Posterior vena cava (tissue), 2 donors: ENCODE measurements at regions of chr9 and their contacts with region 1.

Region 1: DNA sequence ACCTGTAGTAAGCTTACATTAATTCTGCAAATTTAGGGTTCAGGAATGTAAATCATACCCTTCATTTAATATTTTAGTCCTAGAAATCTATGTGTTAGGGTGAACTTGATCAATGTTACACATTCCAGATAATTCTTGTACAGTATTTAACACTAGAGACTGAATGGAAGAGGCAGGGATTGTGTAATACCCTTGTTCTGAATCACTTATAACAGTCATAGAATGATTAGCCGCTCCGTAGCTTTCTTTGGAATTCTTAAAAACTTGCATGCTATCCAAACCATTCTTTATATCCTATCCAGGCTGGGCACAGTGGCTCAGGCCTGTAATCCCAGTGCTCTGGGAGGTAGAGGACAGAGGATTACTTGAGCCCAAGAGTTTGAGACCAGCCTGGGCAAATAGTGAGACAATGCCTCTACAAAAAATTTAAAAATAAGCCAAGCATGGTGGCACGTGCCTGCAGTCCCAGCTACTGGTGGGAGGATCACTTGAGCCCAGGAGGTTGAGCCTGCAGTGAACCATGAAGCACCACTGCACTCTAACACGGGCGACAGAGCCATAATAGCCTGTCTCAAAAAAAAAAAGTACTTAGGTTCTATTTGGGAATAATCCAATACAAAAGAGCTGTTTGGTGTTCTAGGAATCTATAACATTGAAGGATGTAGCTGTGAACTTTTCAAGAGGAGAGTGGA is 8.3 kb downstream of the ZNF483 start:
- DNase-seq: no peak

Region 2: DNA sequence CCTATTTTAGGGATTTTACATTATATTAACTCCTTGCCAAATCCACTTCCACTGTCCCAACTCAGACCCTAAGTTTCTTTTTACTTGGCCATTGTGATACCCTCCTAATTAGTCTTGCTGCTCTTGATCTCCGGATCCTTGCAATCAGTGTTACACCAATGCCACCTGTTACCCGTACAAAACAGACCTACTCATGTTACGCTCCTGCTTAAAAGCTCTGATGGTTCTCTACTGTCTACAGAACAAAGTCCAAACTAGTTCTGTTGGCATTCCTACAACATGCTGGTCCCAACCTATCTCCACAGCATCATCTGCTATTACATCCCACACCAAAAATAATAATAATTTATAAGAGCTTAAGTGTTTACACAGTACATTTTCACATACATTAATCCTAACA is 58.9 kb before region 1 on chr9:
- intact Hi-C with region 1: loop called in 1 of 2 experiments (anchors 1 kb)
- DNase-seq: no peak